ENCODE measurements at regions of chr3 and their contacts with region 1.

Region 1: DNA sequence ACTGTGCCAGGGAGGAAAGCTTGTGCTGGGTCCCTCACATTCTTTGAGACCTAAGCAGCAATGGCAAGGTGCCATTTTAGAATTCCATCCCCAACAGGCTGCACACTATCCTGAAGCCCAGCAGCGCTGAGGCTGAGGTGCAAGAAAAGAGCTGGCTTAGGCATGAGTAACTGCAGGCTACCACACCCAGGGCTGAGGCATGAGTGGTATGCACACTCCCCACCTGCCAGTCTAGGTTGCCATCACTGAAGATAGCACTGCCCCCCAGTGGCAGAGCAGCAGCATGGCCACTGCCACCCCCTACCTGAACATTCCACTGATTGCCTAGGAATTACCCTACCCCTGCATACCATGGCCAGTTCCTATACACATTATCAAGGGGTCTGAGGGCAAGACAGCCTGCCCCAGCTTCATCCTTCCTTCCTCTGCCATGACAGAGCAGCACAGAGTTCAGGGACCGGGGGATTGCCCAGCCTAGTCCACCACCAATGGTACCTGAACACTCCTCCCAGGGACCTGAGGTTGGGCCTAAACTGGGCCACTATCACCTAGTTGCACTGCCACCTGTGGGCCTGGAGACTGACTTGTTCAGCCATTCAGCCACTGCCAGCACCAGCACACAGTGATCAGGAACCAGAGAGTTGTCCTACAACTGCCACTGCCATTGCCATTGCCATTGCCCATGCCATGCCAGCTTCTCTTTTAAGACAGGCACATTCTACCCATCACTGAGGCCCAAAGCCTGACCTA is 129.8 kb downstream of the SATB1 start:
- DNase-seq: peak; percentile 89
- H3K4me3 Mint-ChIP-seq: no peak overlapping the region
- H3K27ac Mint-ChIP-seq: peak overlapping the region; percentile 82
- H3K4me1 Mint-ChIP-seq: peaks cover 6% of the 10 kb centered on the region
- H3K27me3 Mint-ChIP-seq: no peaks in the 10 kb centered on the region
- CTCF ChIP-seq: peak; percentile 90

Region 2: GRCh38 chr3:17431004-17431403 is 864.3 kb before region 1 on chr3:
- CTCF ChIA-PET with region 1: interaction called, 4 read pairs
- POLR2A ChIA-PET with region 1: no interaction called
- intact Hi-C with region 1: loop called (anchors 2 kb)
- DNase-seq: peak; percentile 54
- H3K4me3 Mint-ChIP-seq: no peak overlapping the region
- H3K27ac Mint-ChIP-seq: no peak overlapping the region
- H3K4me1 Mint-ChIP-seq: peaks cover 4% of the 10 kb centered on the region
- H3K27me3 Mint-ChIP-seq: no peaks in the 10 kb centered on the region
- CTCF ChIP-seq: peak; percentile 42

Region 3: GRCh38 chr3:17894434-17895060 is 400.8 kb before region 1 on chr3:
- CTCF ChIA-PET with region 1: interaction called, 7 read pairs
- POLR2A ChIA-PET with region 1: interaction called, 4 read pairs
- intact Hi-C with region 1: loop called (anchors 1 kb)
- DNase-seq: peak; percentile 75
- H3K4me3 Mint-ChIP-seq: no peak overlapping the region
- H3K27ac Mint-ChIP-seq: no peak overlapping the region
- H3K4me1 Mint-ChIP-seq: peaks cover 9% of the 10 kb centered on the region
- H3K27me3 Mint-ChIP-seq: no peaks in the 10 kb centered on the region
- CTCF ChIP-seq: peak; percentile 63

Region 4: GRCh38 chr3:17905996-17906395 is 389.4 kb before region 1 on chr3:
- CTCF ChIA-PET with region 1: interaction called, 5 read pairs
- POLR2A ChIA-PET with region 1: no interaction called
- intact Hi-C with region 1: loop called (anchors 5 kb)
- DNase-seq: peak; percentile 2
- H3K4me3 Mint-ChIP-seq: no peak overlapping the region
- H3K27ac Mint-ChIP-seq: no peak overlapping the region
- H3K4me1 Mint-ChIP-seq: no peaks in the 10 kb centered on the region
- H3K27me3 Mint-ChIP-seq: no peaks in the 10 kb centered on the region
- CTCF ChIP-seq: no peak

Region 5: GRCh38 chr3:17974206-17974841 is 321.0 kb before region 1 on chr3:
- CTCF ChIA-PET with region 1: interaction called, 3 read pairs
- POLR2A ChIA-PET with region 1: no interaction called
- intact Hi-C with region 1: loop called (anchors 1 kb)
- DNase-seq: no peak
- H3K4me3 Mint-ChIP-seq: no peak overlapping the region
- H3K27ac Mint-ChIP-seq: no peak overlapping the region
- H3K4me1 Mint-ChIP-seq: no peaks in the 10 kb centered on the region
- H3K27me3 Mint-ChIP-seq: no peaks in the 10 kb centered on the region
- CTCF ChIP-seq: no peak

Region 6: DNA sequence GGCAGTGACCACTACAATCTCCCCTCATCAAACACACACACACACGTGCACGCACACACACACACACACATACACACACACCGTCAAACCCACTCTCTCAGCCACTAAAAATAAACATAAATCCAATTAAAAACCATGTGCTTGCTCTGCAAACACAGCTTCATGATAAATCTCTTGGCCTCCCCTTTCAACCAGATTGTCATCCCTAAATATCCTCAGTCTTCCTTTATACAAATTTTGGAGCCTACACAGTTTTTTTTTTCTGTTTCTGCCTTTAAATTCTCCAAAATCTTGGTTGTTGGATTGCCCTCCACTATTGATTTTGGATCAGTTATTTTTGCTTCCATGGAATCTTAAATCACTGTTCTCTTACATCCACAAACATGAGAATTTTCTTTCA is 115.8 kb before region 1 on chr3:
- CTCF ChIA-PET with region 1: no interaction called
- POLR2A ChIA-PET with region 1: no interaction called
- intact Hi-C with region 1: no loop called
- DNase-seq: no peak
- H3K4me3 Mint-ChIP-seq: no peak overlapping the region
- H3K27ac Mint-ChIP-seq: no peak overlapping the region
- H3K4me1 Mint-ChIP-seq: no peaks in the 10 kb centered on the region
- H3K27me3 Mint-ChIP-seq: no peaks in the 10 kb centered on the region
- CTCF ChIP-seq: no peak

Region 7: DNA sequence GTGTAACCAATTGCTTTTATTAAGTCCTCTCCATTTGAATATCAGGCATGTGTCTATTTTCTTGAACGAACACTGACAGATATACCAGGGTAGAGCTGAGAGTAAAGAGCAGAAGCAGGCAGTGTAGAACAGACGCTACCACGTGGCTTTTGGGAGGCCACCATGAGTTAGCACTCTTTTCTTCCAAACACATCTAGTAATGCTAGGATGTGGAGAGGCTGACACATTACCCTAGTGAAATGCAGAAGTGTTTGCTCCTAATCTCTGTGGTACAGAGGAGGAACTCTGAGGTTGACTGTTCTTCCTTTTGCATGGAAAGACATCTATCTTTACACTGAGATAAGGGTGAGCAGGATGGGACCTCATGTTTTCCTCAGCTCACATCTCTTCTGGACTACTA is 86.5 kb before region 1 on chr3:
- CTCF ChIA-PET with region 1: no interaction called
- POLR2A ChIA-PET with region 1: no interaction called
- intact Hi-C with region 1: no loop called
- DNase-seq: no peak
- H3K4me3 Mint-ChIP-seq: no peak overlapping the region
- H3K27ac Mint-ChIP-seq: no peak overlapping the region
- H3K4me1 Mint-ChIP-seq: no peaks in the 10 kb centered on the region
- H3K27me3 Mint-ChIP-seq: no peaks in the 10 kb centered on the region
- CTCF ChIP-seq: no peak

Region 8: GRCh38 chr3:18389108-18389733 is 93.9 kb after region 1 on chr3:
- CTCF ChIA-PET with region 1: no interaction called
- POLR2A ChIA-PET with region 1: no interaction called
- intact Hi-C with region 1: no loop called
- DNase-seq: peak; percentile 44
- H3K4me3 Mint-ChIP-seq: no peak overlapping the region
- H3K27ac Mint-ChIP-seq: no peak overlapping the region
- H3K4me1 Mint-ChIP-seq: no peaks in the 10 kb centered on the region
- H3K27me3 Mint-ChIP-seq: peaks cover 6% of the 10 kb centered on the region
- CTCF ChIP-seq: peak; percentile 42

Region 9: GRCh38 chr3:18469775-18470174 is 174.4 kb after region 1 on chr3:
- CTCF ChIA-PET with region 1: no interaction called
- POLR2A ChIA-PET with region 1: no interaction called
- intact Hi-C with region 1: no loop called
- DNase-seq: no peak
- H3K4me3 Mint-ChIP-seq: no peak overlapping the region
- H3K27ac Mint-ChIP-seq: no peak overlapping the region
- H3K4me1 Mint-ChIP-seq: no peaks in the 10 kb centered on the region
- H3K27me3 Mint-ChIP-seq: peaks cover 53% of the 10 kb centered on the region
- CTCF ChIP-seq: no peak